ENCODE measurements at regions of chr10 and their contacts with region 1.

Region 1: GRCh38 chr10:42380926-42381547 is 257.3 kb downstream of the ZNF33B start:
- DNase-seq: no peak
- ATAC-seq: no peak
- H3K4me3 ChIP-seq: no peak overlapping the region
- H3K27ac ChIP-seq: no peak overlapping the region
- H3K4me1 ChIP-seq: no peaks in the 10 kb centered on the region
- H3K27me3 ChIP-seq: no peaks in the 10 kb centered on the region
- CTCF ChIP-seq: no peak
- EP300 ChIP-seq: no peak
- POLR2A ChIP-seq: no peak
- RAD21 ChIP-seq: no peak

Region 2: DNA sequence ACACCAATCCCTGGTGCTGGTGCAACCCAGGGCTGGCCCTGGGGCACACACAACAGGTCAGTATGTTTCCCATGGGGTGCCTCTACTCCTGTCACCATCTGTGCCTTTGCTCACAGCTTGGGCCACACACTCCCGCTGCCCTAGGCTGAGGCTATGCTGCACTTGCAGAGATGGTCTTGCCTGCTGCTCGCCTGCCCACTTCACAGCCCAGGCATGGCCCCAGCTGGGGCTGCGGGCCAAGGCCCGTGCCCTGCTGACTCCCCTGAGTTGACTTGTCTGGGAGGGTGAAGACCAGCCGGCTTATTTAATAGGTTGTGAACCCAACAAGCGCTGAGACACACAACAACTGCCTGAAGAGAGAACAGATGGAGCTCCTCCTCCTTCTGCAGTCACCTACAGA is 73.3 kb after region 1 on chr10:
- CTCF ChIA-PET with region 1: no interaction called
- POLR2A ChIA-PET with region 1: no interaction called
- in situ Hi-C with region 1: no loop called
- intact Hi-C with region 1: no loop called
- DNase-seq: no peak
- ATAC-seq: no peak
- H3K4me3 ChIP-seq: no peak overlapping the region
- H3K27ac ChIP-seq: no peak overlapping the region
- H3K4me1 ChIP-seq: no peaks in the 10 kb centered on the region
- H3K27me3 ChIP-seq: no peaks in the 10 kb centered on the region
- CTCF ChIP-seq: no peak
- EP300 ChIP-seq: no peak
- POLR2A ChIP-seq: no peak
- RAD21 ChIP-seq: no peak

Region 3: GRCh38 chr10:42734536-42734935 is 353.5 kb after region 1 on chr10:
- CTCF ChIA-PET with region 1: no interaction called
- POLR2A ChIA-PET with region 1: no interaction called
- in situ Hi-C with region 1: no loop called
- intact Hi-C with region 1: no loop called
- DNase-seq: no peak
- ATAC-seq: no peak
- H3K4me3 ChIP-seq: no peak overlapping the region
- H3K27ac ChIP-seq: no peak overlapping the region
- H3K4me1 ChIP-seq: no peaks in the 10 kb centered on the region
- H3K27me3 ChIP-seq: peaks cover 0 to 8% of the 10 kb centered on the region in 2 experiments; a peak in 2 of 5 replicates
- CTCF ChIP-seq: no peak
- EP300 ChIP-seq: no peak
- POLR2A ChIP-seq: no peak
- RAD21 ChIP-seq: no peak

Region 4: GRCh38 chr10:43032613-43033012 is 651.6 kb after region 1 on chr10:
- CTCF ChIA-PET with region 1: no interaction called
- POLR2A ChIA-PET with region 1: no interaction called
- in situ Hi-C with region 1: no loop called
- intact Hi-C with region 1: loop called (anchors 5 kb)
- DNase-seq: no peak
- ATAC-seq: no peak
- H3K4me3 ChIP-seq: no peak overlapping the region
- H3K27ac ChIP-seq: no peak overlapping the region
- H3K4me1 ChIP-seq: no peaks in the 10 kb centered on the region
- H3K27me3 ChIP-seq: peaks cover 2 to 15% of the 10 kb centered on the region in 2 experiments; a peak in 3 of 5 replicates
- CTCF ChIP-seq: no peak
- EP300 ChIP-seq: no peak
- POLR2A ChIP-seq: no peak
- RAD21 ChIP-seq: no peak